AG04449 (cell line): ENCODE measurements at regions of chr5 and their contacts with region 1.

Region 1: DNA sequence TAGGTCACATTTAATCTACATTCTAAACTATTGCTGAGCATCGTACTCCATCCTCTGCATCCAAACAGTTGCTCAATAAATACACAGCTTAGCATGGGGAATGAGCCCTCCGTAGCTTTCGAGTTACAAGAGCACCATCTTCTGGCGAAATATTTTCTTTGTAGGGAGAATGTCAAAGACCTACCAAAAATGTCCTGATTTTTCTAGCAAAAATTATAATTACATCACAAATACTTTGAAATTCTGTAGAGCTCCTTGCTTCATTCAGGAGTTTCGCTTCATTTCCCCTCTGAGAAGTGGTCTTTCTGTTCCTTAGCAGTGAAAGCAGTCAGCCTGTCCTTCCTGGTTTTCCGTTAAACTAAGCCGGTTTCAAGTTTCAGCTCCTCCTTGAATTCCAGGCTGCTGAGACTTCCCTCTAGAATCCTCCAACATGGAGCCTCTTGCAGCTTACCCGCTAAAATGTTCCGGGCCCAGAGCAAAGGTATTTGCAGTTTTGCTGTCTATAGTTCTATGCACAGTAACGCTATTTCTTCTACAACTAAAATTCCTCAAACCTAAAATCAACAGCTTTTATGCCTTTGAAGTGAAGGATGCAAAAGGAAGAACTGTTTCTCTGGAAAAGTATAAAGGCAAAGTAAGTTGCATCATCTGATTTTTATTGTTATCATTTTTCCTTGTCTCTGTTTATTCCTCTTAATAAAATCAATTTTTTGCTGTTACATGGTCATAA is at the start of gene GPX8:
- DNase-seq: peak; percentile 59
- H3K4me3 ChIP-seq: peak within 1 kb of the TSS; percentile 69
- CTCF ChIP-seq: peak; percentile 26

Region 2: GRCh38 chr5:55146543-55147151 is 13.3 kb before region 1 on chr5:
- CTCF ChIA-PET with region 1: interaction called, 18 read pairs
- POLR2A ChIA-PET with region 1: no interaction called
- DNase-seq: peak; percentile 17
- H3K4me3 ChIP-seq: no peak overlapping the region
- CTCF ChIP-seq: peak; percentile 95